Ascending aorta (tissue), 2 donors: ENCODE measurements at regions of chr1 and their contacts with region 1.

Region 1: DNA sequence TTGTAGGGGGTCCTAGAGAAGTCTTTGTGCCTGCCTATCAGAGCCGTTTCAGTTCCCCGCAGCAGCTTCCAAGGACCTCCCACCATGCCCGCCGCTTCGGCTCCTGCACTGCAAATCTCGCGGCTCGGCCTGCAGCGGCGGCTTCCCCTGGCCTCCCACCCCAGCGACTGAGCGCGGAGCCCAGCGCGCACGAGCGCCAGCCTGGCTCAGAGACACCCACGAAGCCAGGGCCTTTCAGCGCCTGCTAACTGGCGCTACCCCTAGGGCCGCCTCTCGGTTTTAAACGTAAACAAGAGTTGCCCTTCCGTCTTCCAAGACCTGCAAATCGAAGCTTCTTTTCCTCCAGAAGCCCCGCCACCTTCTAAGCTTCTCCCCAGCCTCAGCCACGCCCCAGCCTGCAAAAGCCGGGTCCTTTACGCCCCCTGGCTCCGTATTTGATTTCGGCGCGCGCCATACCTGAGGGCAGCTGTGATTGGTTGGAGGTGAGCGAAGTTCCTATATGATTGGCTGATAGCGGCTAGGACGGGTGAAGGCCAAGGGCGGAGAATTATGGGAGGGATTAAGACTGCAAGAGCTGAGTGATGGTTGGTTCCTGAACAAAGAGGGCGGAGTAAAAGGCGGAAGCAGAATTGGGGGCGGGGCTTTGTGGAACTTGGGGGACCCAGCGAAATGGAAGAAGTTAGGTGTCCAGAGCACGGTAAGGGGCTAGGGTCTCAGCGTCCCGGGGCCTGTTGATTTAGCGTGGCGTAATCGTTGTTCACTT is at the start of gene TTF2:
- DNase-seq: peak; percentile 92 to 97
- H3K4me3 ChIP-seq: peak within 1 kb of the TSS; percentile 77 to 79
- H3K27ac ChIP-seq: peak within 1 kb of the TSS; percentile 39 to 53
- H3K4me1 ChIP-seq: peaks cover 0 to 6% of the 10 kb centered on the region in 2 donors
- H3K27me3 ChIP-seq: no peaks in the 10 kb centered on the region
- CTCF ChIP-seq: peak in 1 of 3 experiments; percentile 23
- total RNA-seq, gene TTF2: 4.4 TPM

Region 2: GRCh38 chr1:116372587-116373444 is 687.0 kb before region 1 on chr1 and contains the start of gene ATP1A1:
- intact Hi-C with region 1: loop called (anchors 2 kb)
- DNase-seq: peak; percentile 94 to 98
- H3K4me3 ChIP-seq: peak within 1 kb of the TSS; percentile 78 to 81
- H3K27ac ChIP-seq: peak within 1 kb of the TSS; percentile 95 to 96
- H3K4me1 ChIP-seq: peaks cover 17 to 36% of the 10 kb centered on the region in 2 donors
- H3K27me3 ChIP-seq: no peaks in the 10 kb centered on the region
- CTCF ChIP-seq: no peak
- total RNA-seq, gene ATP1A1: 255 TPM

Region 3: DNA sequence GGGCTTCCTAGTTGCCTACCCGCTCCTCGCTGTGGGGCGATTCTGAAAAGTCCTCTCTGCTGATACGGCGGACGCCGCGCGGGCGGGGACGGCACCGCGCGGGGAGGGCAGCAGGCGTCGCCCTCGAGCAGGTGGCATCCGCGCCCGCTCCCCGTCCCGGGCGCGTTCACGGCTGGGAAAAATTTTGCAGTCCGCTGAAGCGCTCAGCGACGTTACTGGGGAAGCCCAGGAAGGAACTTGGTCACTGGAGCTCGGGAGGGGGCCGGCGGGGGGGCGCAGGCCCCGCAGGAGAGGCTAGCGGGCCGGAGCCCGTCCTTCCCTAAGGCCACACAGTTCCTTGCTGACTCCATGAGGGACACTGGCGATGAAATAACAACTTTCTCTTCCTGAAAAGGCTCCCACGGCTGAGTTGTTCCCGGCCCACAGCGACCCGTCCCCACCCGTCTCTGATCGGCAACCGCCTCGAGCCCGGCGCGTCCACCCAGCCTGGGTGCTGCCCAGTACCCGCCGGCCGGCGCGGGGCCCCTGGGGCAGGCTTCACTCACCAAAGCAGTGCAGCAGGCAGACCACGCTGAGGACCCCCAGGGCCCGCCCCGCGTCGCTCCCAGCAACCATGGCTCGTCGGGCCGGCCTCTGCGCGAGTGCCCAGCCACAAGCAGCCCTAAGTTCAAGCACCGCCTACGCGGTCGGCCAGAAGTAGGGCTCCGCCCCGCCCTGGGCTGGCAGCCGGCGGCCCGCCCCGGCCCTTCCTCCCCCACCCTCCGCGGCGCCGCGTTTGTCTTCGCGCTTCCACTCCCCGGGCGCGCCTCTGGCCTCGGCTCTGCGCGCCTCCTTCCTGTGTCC is 489.3 kb before region 1 on chr1 and contains the start of gene CD58:
- intact Hi-C with region 1: loop called (anchors 5 kb)
- DNase-seq: peak; percentile 55 to 95
- H3K4me3 ChIP-seq: peak within 1 kb of the TSS; percentile 91 to 92
- H3K27ac ChIP-seq: peak within 1 kb of the TSS; percentile 99 to 100
- H3K4me1 ChIP-seq: peaks cover 0 to 11% of the 10 kb centered on the region in 2 donors
- H3K27me3 ChIP-seq: no peaks in the 10 kb centered on the region
- CTCF ChIP-seq: peak; percentile 73 to 81 (median 78)
- total RNA-seq, gene CD58: 50.7 TPM

Region 4: GRCh38 chr1:116737020-116737854 is 322.6 kb before region 1 on chr1:
- intact Hi-C with region 1: loop called (anchors 1 kb)
- DNase-seq: no peak
- H3K4me3 ChIP-seq: no peak overlapping the region
- H3K27ac ChIP-seq: no peak overlapping the region
- H3K4me1 ChIP-seq: no peaks in the 10 kb centered on the region
- H3K27me3 ChIP-seq: no peaks in the 10 kb centered on the region
- CTCF ChIP-seq: peak; percentile 43 to 68 (median 54)

Region 5: GRCh38 chr1:116909510-116910378 is 150.1 kb before region 1 on chr1 and contains the start of gene PTGFRN:
- intact Hi-C with region 1: loop called (anchors 5 kb)
- DNase-seq: peak in 1 of 2 donors; percentile 76
- H3K4me3 ChIP-seq: peak within 1 kb of the TSS; percentile 73 to 94
- H3K27ac ChIP-seq: peak within 1 kb of the TSS; percentile 79 to 85
- H3K4me1 ChIP-seq: peaks cover 0 to 6% of the 10 kb centered on the region in 2 donors
- H3K27me3 ChIP-seq: no peaks in the 10 kb centered on the region
- CTCF ChIP-seq: no peak
- total RNA-seq, gene PTGFRN: 11.2 TPM

Region 6: DNA sequence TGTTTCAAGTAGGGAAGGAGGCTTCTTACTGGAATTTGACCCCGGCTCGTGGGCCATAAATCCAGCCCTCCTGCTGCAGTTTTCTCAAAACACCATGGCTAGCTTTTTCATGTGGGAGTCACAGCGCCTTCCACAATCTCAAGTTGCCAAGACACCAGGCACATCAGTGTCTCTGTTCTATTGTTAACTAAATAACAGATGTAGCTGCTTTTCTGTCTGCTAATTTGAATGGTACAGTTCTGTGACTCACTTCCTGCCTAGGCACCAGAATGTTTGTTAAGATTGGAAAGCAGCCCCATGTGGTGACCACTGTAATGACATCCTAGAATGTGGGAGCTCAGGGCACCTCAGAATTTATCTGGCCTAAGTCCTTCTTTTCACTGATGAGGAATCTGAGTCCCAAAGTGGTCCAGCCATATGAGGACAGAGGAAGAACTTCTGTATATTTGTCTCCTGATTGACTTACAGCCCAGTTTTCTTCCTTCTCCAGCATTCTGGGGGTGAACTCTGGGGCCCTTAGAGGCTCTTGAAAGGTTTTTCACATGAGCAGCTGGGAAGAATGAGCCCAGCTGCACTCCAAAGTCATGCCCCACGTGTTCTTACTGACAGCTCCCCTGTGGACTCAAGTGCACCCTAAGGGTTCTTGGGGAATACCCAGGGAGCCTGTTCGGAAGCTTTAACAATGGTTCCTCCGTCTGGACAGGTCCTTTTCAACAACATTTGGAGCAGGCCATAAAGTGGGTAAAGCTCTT is 34.2 kb after region 1 on chr1:
- intact Hi-C with region 1: loop called (anchors 2 kb)
- DNase-seq: peak in 1 of 2 donors; percentile 63
- H3K4me3 ChIP-seq: no peak overlapping the region
- H3K27ac ChIP-seq: peak overlapping the region; percentile 89 to 91
- H3K4me1 ChIP-seq: peaks cover 6 to 32% of the 10 kb centered on the region in 2 donors
- H3K27me3 ChIP-seq: no peaks in the 10 kb centered on the region
- CTCF ChIP-seq: peak; percentile 36 to 43 (median 41)

Region 7: DNA sequence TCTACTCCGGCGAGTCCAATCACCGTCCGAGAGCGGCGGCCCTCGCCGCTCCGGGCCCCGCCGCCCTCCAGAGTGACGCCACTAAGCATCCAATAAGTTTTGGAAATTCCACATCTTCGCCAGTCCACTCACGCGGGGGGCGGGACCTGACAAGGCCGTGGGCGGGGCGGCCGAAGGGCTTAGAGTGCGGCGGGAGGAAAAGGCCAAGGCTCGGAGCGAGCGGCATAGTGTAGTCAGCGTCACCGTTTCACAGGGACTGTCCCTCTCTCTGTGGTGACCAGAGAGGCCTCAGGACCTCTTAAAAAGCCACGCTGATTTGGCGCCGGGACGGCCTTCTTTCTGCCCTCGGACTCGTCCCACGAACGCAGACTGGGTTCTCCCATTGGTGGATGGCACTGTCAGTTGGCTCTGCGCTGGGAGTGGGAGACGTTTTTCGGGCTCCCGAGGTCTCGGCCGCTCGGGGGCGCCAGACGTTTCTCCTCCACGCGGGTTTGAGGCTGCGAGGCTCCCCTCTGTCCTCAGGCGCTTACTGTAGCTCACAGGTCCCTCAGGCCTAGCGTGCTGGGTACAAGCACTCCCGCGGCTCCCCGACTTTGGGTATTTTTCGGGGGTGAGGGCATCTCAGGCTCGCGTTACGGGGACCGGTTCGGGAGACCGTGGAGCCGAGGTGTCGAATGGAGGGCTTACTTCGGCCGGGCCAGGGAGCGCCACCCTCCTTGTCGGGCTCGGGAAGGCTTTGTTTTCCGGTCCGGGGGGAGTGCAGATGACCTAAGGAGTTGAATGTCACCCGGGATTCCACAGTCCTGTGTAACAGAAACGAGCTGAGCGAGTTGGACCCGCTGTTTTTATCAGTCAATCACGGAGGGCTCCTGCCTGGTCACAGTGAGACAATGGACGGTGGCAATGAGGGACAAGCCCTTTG is 62.2 kb after region 1 on chr1:
- intact Hi-C with region 1: loop called (anchors 1 kb)
- DNase-seq: peak; percentile 86 to 99
- H3K4me3 ChIP-seq: peak overlapping the region; percentile 73 to 90
- H3K27ac ChIP-seq: peak overlapping the region; percentile 86 to 88
- H3K4me1 ChIP-seq: peaks cover 3 to 5% of the 10 kb centered on the region in 2 donors
- H3K27me3 ChIP-seq: no peaks in the 10 kb centered on the region
- CTCF ChIP-seq: peak; percentile 66 to 86 (median 80)